Ovary (tissue), 10 donors: ENCODE measurements at regions of chr1 and their contacts with region 1.

Region 1: GRCh38 chr1:163315773-163316374 is 5.9 kb upstream of the NUF2 start:
- DNase-seq: peak in 2 of 5 donors; percentile 16
- H3K4me3 ChIP-seq: no peak overlapping the region
- H3K27ac ChIP-seq: no peak overlapping the region
- H3K4me1 ChIP-seq: no peaks in the 10 kb centered on the region
- H3K27me3 ChIP-seq: no peaks in the 10 kb centered on the region
- CTCF ChIP-seq: peak; percentile 17 to 41 (median 31)
- EP300 ChIP-seq: no peak
- POLR2A ChIP-seq: no peak

Region 2: DNA sequence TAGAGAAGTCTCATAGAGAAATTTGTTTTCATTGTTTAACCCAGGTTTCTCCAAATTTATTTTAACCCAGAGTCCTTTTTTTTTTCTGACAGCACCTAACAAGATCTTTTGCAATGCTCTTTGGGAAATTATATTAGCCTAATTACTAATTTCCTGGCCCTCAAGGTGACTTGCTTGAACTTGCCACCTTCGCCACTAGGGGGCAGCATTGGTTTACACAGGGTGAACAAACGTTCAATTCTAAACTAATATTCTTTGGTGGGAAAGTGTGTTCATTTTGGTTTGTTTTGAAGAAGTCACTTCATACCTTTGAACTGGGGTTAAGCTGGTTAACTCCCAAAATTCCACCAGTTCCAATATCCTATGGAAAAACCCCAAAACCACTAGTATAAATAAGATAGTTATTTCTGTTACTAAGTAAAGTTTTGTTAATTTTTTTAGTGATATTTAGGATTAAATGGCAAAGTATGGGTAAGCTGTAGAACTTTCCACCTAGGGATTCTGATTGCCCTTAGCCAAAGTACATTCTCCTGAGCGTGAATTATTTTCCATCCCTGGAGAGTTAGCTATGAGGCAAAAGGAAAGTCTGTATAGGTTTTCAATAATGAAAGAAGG is 467.9 kb before region 1 on chr1:
- intact Hi-C with region 1: loop called in 2 of 4 experiments (anchors 5 to 10 kb)
- DNase-seq: peak; percentile 70 to 85 (median 82)
- H3K4me3 ChIP-seq: no peak overlapping the region
- H3K27ac ChIP-seq: no peak overlapping the region
- H3K4me1 ChIP-seq: no peaks in the 10 kb centered on the region
- H3K27me3 ChIP-seq: no peaks in the 10 kb centered on the region
- CTCF ChIP-seq: peak; percentile 60 to 86 (median 73)
- EP300 ChIP-seq: no peak
- POLR2A ChIP-seq: no peak

Region 3: DNA sequence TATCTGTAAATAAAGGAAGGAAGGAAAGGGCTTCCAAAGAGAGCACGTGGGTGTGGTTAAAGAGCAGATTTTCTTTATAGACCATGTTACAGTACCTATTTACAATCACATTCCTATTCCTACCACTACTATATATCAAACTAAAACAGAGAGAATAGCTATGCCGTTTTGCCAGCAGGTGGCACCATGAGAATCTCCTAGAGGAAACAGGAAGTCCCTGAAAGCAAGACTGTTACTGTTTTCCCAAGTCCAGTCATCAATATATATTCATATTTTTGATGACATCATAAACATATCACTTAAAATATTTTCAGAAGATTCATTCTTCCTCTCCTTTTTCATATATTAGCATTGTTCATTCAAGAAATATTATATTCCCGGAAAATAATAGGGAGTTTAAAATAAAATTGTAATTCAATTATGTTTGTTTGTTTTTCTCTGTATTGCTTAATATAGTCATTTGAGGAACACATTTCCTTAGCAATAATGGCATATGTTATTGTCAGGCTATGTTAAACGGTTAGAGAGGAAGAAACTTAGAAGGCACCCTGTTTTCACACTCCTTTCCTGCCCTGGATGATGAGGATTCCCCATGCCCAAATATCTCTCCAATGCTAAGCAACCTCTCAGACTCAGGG is 461.5 kb before region 1 on chr1:
- intact Hi-C with region 1: loop called in 2 of 4 experiments (anchors 5 to 10 kb)
- DNase-seq: peak in 4 of 5 donors; percentile 42 to 57 (median 50)
- H3K4me3 ChIP-seq: no peak overlapping the region
- H3K27ac ChIP-seq: no peak overlapping the region
- H3K4me1 ChIP-seq: no peaks in the 10 kb centered on the region
- H3K27me3 ChIP-seq: no peaks in the 10 kb centered on the region
- CTCF ChIP-seq: peak; percentile 21 to 46 (median 34)
- EP300 ChIP-seq: no peak
- POLR2A ChIP-seq: no peak

Region 4: GRCh38 chr1:162878000-162878596 is 437.8 kb before region 1 on chr1:
- intact Hi-C with region 1: loop called in 1 of 4 experiments (anchors 10 kb)
- DNase-seq: peak in 2 of 5 donors; percentile 20 to 29
- H3K4me3 ChIP-seq: no peak overlapping the region
- H3K27ac ChIP-seq: no peak overlapping the region
- H3K4me1 ChIP-seq: no peaks in the 10 kb centered on the region
- H3K27me3 ChIP-seq: no peaks in the 10 kb centered on the region
- CTCF ChIP-seq: peak in 1 of 3 donors; percentile 39
- EP300 ChIP-seq: no peak
- POLR2A ChIP-seq: no peak

Region 5: GRCh38 chr1:162987866-162988265 is 328.0 kb before region 1 on chr1:
- intact Hi-C with region 1: no loop called
- DNase-seq: no peak
- H3K4me3 ChIP-seq: no peak overlapping the region
- H3K27ac ChIP-seq: no peak overlapping the region
- H3K4me1 ChIP-seq: no peaks in the 10 kb centered on the region
- H3K27me3 ChIP-seq: no peaks in the 10 kb centered on the region
- CTCF ChIP-seq: no peak
- EP300 ChIP-seq: no peak
- POLR2A ChIP-seq: no peak